Left cardiac atrium (tissue), 4 donors: ENCODE measurements at regions of chr3 and their contacts with region 1.

Region 1: DNA sequence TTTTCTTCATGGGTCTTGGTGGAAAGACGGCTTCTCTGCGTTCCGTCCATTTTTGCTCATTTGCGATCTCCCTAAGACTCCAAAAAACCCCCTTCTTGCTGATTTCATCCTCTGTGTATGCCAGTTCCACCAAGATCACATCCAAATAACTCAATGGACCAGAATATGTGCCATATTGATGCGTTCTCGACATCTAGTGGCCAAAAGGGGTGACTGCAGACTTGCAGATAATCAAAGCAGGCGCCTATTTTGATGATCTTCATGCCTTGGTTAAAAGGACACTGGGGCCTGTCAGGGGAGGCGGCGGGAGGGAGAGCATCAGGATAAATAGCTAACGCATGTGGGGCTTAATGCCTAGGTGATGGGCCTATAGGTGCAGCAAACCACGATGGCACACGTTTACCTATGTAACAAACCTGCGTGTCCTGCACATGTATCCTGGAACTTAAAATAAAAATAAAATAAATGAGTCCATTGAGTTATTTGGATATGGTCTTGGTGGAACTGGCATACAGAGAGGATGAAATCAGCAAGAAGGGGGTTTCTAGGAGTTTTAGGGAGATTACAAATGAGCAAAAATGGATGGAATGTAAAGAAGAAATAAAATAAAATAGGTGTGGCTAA is 104.2 kb upstream of the RAD18 start:
- DNase-seq: peak; percentile 39
- ATAC-seq: peak; percentile 84

Region 2: DNA sequence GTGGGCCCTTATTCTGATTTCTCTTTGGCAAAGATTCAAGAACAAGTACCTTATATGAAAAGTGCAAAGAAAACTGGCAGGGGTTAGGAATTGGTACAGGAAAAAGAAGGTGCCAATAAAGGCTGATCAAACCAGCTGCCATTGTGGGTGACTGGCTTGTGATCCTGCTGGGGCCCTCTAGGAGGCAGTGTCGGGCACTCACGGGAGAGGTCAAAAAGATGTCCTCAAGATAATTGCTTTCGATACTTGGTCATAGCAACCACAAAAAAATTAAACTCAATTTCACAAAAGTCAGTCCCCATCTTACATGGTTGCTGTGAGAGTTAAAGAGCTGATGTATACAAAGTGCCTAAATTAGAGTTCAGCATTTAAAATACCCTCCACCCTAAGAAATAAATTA is 364.9 kb before region 1 on chr3:
- intact Hi-C with region 1: no loop called
- DNase-seq: no peak
- ATAC-seq: no peak

Region 3: DNA sequence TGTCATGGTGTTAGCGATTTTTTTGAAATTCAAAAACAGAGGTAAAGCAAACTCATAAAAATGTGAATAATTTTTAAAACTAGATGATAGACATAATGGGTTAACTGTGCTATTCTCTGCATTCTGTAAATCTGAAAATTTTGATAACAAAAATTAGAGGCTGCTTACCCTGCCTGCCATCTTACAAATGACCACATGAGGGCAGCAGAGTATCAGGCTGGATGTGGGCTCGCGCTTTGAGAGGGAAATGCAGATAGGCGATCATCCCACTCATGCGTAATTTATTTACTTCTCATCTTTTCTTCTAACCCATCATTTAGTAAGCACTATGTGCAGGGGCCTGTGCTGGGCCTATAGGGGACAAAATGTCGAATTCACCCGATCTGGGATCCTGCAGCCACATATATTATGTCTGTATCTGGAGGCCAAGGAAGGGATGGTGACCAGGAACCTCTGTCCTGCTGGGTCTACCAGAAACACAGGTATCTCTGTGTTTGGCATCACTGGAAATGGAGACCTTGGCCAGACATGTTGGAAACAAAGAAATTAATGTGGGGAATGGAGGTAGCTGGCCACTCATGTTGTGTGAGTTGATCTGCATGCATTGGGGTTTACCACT is 96.4 kb before region 1 on chr3:
- intact Hi-C with region 1: loop called in 1 of 2 experiments (anchors 2 kb)
- DNase-seq: peak; percentile 50
- ATAC-seq: peak; percentile 65 to 68

Region 4: GRCh38 chr3:8987645-8988383 is 79.7 kb before region 1 on chr3:
- intact Hi-C with region 1: loop called (anchors 1 to 5 kb)
- DNase-seq: peak; percentile 60
- ATAC-seq: peak; percentile 72 to 75

Region 5: DNA sequence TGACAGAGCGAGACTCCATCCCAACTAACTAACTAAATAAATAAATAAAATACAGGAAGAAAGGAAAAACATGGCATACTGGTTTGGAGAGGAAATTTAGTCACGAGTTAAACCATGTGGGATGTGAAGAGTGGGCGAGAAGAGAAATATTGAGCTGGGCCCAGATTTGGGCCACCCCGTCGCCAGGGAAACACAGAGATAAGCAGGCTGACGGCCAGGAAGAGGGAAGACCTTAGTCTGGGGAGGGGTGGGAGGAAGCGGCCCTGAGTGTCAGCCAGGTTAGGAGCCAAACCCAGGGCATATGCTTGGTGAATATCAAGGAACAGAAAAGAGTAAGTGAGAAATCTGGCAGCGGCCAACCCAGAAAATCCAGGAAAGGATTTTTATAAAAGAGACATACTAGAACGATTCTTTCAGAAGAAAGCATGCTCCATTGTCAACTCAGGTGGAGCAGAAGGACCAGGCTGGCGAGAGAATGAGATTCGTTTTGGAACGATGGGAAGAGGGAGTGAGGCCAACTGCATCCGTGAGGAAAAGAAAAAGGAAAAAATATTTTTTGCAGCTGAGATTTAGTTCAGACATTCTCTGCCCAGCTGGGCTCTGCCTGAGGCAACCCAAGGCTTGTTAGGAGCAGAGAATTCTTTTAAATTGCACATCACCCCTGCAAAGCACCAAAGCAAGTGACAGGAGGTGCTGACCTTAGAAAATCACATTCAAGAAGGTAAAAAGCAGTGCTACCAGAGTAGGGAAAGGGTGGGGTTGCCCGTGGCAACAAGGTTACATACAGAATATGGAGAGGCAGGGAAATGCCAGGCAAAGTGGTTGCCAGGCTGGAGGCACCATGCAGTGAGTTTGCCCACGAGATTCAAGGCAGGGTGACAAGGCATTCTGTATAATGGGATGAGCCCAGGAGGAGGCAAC is 44.9 kb before region 1 on chr3:
- intact Hi-C with region 1: no loop called
- DNase-seq: peak; percentile 25
- ATAC-seq: peak; percentile 32 to 42